Activated CD4-positive, alpha-beta T cell treated with anti-CD3 and anti-CD28 coated beads, Interleukin-2, amount 10 ng/mL, durations not matched to agents 24 days and 14 days (primary cell): ENCODE measurements at regions of chr14 and their contacts with region 1.

Region 1: DNA sequence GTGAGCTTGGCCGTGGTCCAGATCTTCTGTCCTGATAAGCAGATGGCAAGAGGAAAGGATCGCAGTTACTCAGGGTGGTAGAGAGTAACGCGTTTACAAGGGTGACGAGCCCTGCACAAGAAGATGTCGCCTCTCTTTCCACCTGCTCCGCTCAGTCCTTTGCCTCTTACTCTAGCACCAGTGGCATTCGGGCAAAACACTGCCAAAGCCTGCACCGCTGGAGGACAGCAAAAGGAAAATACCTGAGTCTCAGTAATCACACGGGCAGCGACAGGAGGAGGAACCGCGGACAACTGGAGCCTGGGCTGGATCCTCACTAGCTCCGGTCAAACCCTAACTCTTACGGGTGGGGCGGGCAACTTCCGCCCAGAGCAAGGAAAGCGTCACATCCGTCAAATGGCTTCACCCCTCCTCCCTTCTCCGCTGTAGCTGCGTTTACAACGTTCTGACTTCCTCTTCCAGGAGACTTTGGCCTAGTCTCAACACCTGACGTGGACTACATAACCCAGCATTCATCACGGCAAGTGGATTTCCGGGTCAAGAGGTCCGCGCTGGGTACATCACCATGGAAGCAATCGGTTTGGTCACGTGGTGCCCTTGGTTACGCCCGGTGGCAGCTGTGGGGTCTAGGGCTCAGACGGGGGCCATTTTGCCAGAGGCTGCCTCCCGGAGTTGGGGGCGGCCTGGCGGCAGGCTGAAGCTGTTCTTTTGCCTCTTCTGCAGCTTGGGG is at the starts of genes KLHL28 and TOGARAM1:
- DNase-seq: peak; percentile 99
- H3K4me3 Mint-ChIP-seq: no peak within 1 kb of the TSS
- H3K27ac Mint-ChIP-seq: no peak within 1 kb of the TSS
- H3K4me1 Mint-ChIP-seq: peaks cover 41% of the 10 kb centered on the region
- H3K27me3 Mint-ChIP-seq: no peaks in the 10 kb centered on the region
- total RNA-seq, gene KLHL28: 14.7 and 14.9 TPM in 2 replicates
- total RNA-seq, gene TOGARAM1: 7.6 and 7.9 TPM in 2 replicates

Region 2: DNA sequence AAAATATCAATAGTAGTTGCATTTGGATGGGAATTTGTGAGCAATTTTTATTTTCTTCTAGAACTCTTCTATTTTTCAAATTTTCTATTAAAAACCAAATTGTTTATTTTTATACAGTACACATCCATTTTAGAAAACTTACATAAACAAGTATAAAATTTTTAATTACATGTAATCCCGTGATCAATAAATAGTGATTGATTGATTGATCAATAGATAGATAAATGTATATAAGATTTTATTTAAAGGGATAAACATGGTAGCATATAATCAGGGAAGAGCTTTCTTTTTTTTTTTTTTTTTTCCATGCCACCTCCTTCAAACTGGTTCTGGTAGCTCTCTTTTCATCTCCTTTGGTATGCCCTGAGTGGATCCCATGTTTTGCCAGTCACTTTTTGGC is 118.6 kb before region 1 on chr14:
- intact Hi-C with region 1: no loop called
- DNase-seq: no peak
- H3K4me3 Mint-ChIP-seq: no peak overlapping the region
- H3K27ac Mint-ChIP-seq: no peak overlapping the region
- H3K4me1 Mint-ChIP-seq: peaks cover 3% of the 10 kb centered on the region
- H3K27me3 Mint-ChIP-seq: peaks cover 5% of the 10 kb centered on the region

Region 3: DNA sequence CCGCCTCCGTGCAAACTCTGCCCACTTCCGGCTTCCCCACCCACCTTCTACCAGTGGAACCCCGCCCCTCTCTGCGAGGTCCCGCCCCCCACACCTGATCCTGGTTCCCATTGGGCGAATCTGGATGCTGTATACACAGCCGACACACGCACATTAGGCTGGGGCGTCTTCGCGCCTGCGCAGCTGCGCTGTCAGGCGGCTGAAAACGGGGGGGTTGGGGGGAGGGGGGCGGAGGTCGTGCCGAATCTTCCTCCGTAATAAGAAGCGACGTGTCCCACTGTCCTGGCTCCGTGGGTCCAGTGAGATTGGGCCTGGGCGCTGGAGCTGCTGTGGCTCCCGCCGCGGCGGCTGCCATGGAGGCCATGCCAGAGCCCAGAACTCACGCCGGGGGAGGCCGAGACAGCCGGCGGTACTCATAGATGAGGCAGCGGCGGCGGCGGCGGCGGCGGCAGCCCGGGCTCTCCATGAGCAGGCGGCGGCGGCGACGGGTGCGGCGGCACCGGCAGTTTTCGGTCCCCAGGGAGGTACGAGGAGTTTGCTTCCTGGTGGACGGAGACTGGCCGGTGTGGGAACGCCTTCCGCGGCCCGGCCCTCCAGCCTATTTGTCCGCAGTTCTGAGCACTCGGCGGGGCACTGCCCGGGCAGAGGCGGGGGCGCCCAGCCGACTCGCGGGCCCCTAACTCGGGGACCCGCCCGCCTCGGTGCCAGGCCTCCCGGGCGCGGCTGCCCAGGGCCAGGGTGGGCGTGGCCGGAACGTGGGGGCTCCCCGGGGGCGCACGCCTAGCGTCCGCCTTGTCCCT is 64.5 kb before region 1 on chr14:
- intact Hi-C with region 1: loop called (anchors 1 kb)
- DNase-seq: peak; percentile 96
- H3K4me3 Mint-ChIP-seq: peak overlapping the region; percentile 86
- H3K27ac Mint-ChIP-seq: peak overlapping the region; percentile 93
- H3K4me1 Mint-ChIP-seq: peaks cover 10% of the 10 kb centered on the region
- H3K27me3 Mint-ChIP-seq: no peaks in the 10 kb centered on the region

Region 4: GRCh38 chr14:44912041-44912869 is 49.5 kb before region 1 on chr14:
- intact Hi-C with region 1: loop called (anchors 5 kb)
- DNase-seq: no peak
- H3K4me3 Mint-ChIP-seq: peak overlapping the region; percentile 31
- H3K27ac Mint-ChIP-seq: no peak overlapping the region
- H3K4me1 Mint-ChIP-seq: no peaks in the 10 kb centered on the region
- H3K27me3 Mint-ChIP-seq: peaks cover 40% of the 10 kb centered on the region

Region 5: DNA sequence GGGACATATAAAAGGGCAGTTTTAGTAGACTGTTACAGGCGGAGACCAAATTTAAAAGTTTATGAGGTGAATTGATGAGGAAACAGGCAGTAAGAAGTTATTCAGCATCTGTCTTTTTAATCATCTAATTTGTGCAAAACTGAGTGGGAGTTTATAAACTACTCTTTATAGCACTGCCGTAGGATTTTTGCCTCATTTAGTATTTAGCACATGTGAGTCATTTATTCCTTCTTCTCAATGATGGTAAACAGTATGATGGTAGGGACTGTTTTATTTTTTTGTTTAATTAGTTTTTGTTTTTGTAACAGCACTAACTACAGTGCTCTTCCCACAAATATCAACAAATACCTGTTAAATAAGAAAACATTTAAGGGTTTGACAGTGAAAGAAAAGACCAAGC is 20.8 kb after region 1 on chr14:
- intact Hi-C with region 1: loop called (anchors 2 kb)
- DNase-seq: no peak
- H3K4me3 Mint-ChIP-seq: no peak overlapping the region
- H3K27ac Mint-ChIP-seq: peak overlapping the region; percentile 57
- H3K4me1 Mint-ChIP-seq: peaks cover 17% of the 10 kb centered on the region
- H3K27me3 Mint-ChIP-seq: no peaks in the 10 kb centered on the region

Region 6: GRCh38 chr14:45083971-45084722 is 122.4 kb after region 1 on chr14 and contains the start of gene PRPF39:
- intact Hi-C with region 1: loop called (anchors 1 kb)
- DNase-seq: peak; percentile 99
- H3K4me3 Mint-ChIP-seq: peak within 1 kb of the TSS; percentile 98
- H3K27ac Mint-ChIP-seq: peak within 1 kb of the TSS; percentile 98
- H3K4me1 Mint-ChIP-seq: peaks cover 35% of the 10 kb centered on the region
- H3K27me3 Mint-ChIP-seq: no peaks in the 10 kb centered on the region
- total RNA-seq, gene PRPF39: 48.1 and 50.5 TPM in 2 replicates

Region 7: GRCh38 chr14:45089813-45090212 is 128.0 kb after region 1 on chr14:
- intact Hi-C with region 1: loop called (anchors 1 kb)
- DNase-seq: no peak
- H3K4me3 Mint-ChIP-seq: peak overlapping the region; percentile 27
- H3K27ac Mint-ChIP-seq: peak overlapping the region; percentile 78
- H3K4me1 Mint-ChIP-seq: peaks cover 47% of the 10 kb centered on the region
- H3K27me3 Mint-ChIP-seq: no peaks in the 10 kb centered on the region

Region 8: DNA sequence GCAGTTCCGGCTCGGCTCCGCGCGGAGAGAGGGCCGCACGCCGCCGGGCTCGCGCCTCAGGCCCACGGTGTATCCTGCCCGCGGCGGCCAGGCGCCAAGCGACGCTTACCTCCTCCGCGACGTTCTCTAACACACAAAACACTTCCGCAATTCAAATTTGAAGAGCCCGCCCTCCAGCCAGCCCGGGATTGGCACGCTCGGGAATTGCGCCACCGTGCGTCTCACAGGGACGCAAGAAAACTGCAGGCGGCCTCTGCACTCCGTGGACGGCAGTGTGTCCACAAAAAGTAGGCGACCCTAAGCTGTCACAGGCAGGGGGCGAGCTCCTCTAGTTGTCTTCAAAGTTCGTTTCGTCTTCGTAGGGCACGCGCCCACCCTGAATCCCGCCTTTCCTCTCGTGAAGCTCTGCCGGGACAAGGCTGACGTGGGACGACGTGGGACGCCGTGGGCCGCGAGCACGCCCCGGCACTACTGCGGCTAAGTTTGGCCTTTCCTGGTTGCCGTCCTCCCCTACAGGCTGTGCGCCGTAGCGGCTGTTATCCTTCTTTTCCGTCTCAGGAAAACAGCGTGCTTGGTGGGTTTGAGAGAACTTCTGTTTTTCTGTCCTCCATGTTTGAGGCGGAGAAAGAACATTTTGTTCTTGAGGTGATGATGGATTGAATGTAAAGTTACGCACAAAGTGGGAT is 291.4 kb after region 1 on chr14 and contains the start of gene MIS18BP1:
- intact Hi-C with region 1: loop called (anchors 1 kb)
- DNase-seq: peak; percentile 98
- H3K4me3 Mint-ChIP-seq: peak within 1 kb of the TSS; percentile 96
- H3K27ac Mint-ChIP-seq: peak within 1 kb of the TSS; percentile 99
- H3K4me1 Mint-ChIP-seq: peaks cover 24% of the 10 kb centered on the region
- H3K27me3 Mint-ChIP-seq: peaks cover 2% of the 10 kb centered on the region
- total RNA-seq, gene MIS18BP1: 58.9 and 67.1 TPM in 2 replicates

Region 9: GRCh38 chr14:45298423-45299117 is 336.8 kb after region 1 on chr14:
- intact Hi-C with region 1: no loop called
- DNase-seq: no peak
- H3K4me3 Mint-ChIP-seq: no peak overlapping the region
- H3K27ac Mint-ChIP-seq: peak overlapping the region; percentile 64
- H3K4me1 Mint-ChIP-seq: peaks cover 3% of the 10 kb centered on the region
- H3K27me3 Mint-ChIP-seq: no peaks in the 10 kb centered on the region